KBM-7 (cell line): ENCODE measurements at regions of chr12 and their contacts with region 1.

Region 1: DNA sequence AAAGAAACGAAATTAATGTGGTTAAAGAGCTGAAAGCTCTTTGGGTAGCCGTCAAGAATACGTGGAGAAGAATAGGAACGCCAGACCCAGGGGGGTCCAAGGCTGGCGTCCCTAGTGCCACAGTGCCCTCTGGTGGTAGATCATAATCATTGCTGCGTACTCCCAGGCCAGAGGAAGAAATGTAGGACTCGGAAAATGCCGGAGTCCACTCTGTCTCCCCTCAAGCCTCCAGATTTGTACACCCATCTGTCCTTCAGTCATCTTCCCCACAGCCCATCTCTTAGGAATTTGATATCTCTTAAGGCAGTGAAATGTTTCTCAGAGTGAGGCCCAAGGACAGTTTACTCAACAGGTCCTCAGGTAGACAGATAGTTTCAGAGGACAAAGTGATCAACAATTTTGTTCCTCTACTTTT is 25.4 kb upstream of the PLEKHG6 start:
- DNase-seq: peak; percentile 79

Region 2: DNA sequence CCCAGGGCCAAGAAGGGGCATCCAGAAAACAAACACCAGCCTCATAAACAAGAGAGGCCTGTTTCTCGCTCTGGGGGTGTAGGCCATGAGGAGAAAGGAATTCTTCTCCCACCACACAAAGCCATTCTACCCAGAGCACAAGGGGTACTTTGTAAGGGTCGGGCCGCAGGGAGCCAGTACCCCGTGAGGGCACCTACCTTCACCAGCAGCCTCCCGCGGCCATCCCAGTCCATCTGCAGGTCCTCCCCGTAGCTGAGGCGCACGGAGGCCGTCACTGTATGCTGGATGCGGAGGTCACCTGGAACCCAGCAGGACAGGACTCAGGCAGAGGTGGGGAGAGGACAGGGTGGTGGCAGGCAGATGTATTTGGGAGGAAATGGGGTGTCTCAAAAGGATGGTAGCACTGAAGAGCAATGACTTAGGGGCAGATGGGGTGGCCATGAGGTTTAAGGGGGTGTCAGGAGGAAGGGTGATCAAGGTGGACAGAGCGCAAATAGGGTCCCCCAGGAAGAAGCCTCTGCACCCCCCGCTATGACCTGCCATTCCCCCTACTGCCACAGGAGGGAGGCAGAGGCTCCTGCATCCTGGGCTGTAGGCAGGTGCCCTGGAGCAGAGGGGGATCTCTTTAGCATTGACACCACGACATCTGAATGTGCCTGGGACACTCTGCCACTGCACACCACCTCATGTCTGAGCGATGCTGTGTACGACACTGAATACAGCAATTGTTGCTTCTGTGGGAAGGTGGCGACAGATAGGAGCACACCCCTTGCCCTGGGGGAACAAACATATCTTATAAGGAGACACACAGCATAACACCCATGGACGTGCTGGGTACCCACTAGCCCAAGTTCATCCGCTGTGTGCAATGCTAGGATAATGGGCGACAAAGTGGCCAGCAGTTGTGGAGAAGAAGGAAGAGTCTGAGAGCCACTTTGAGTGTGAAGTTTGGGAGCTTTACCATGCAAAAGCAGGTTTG is 222.0 kb before region 1 on chr12:
- in situ Hi-C with region 1: loop called (anchors 10 kb)
- DNase-seq: peak; percentile 56